IMR-90 (cell line): ENCODE measurements at regions of chr10 and their contacts with region 1.

Region 1: DNA sequence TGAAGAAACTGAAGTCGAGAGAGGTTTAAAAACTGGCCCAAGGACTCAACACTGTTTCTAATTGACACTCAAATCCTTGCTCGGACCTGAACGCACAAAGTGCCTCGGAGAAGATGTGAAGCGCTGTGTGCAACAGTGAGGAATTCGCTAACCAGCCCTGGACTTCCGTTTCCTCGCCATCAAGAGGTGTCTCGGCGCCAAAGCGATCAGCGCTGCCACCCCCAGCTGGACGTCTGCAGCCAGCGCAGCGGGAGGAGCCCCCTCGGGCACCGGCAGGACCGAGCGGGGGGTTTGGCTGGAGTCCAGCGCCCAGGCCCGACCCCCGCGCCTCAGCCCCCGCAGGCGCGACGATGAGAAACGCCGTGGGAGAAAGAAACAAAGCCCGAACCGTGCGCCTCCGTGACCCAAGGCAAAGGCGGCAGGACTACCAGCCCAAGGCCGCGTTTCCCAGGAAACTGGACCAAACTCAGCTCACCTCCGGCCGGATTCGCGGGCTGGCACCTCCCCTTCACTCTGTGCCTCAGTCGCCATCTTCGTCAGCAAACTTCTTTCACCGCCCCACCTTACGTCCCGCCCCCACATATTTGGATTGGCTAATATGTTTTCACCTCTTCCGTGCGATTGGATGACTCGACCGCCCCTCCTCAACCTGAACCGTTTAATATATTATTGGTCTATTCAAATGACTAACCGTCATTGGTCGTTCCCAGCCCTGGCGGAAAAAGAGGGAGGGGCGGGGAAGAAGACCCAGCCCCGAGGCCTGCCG is at the start of gene ARHGAP19:
- DNase-seq: peak; percentile 99
- ATAC-seq: peak; percentile 99
- H3K4me3 ChIP-seq: peak within 1 kb of the TSS; percentile 73
- H3K27ac ChIP-seq: peak within 1 kb of the TSS; percentile 72
- H3K4me1 ChIP-seq: no peaks in the 10 kb centered on the region
- H3K27me3 ChIP-seq: no peaks in the 10 kb centered on the region
- CTCF ChIP-seq: peak; percentile 35; the same call in 1 of the 2 replicates
- POLR2A ChIP-seq: peak; percentile 84
- RAD21 ChIP-seq: 0 out of 2 replicates have a peak, but pooled peaks have one; percentile 13
- total RNA-seq, gene ARHGAP19: 7.0 and 12.8 TPM in 2 replicates

Region 2: DNA sequence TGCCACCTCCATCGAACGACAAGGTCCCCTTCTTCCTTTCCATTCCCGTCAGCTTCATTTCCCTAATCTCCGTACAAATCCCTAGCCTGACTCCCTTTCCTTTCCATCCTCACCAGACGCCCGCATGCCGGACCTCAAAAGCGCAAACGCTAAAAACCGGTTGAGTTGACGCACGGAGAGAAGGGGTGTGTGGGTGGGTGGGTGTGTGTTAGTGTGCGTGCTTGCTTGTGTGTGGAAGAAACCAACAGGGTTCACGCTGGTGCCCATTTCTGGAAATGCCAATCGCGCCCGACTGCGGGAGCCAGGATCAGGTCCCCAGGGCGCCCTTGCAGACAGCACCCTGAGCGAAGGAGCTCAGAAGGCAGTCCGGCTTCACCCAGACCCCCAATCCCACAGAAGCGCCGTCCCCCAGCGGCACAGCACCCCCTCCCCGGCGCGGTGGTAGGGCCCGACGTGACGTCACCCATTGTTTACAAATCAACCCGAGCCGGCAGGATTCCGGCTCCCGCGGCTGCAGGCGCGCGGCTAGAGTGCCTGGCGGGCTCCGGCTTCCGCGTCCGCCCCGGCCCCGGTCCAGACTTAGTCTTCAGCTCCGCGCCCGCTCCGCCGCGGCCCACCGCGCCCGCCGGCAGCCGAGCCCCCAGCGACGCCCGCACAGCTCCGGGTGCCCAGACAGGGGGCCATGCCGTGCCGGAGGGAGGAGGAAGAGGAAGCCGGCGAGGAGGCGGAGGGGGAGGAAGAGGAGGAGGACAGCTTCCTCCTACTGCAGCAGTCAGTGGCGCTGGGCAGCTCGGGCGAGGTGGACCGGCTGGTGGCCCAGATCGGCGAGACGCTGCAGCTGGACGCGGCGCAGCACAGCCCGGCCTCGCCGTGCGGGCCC is 26.7 kb after region 1 on chr10 and contains the start of gene FRAT1:
- CTCF ChIA-PET with region 1: no interaction called
- POLR2A ChIA-PET with region 1: no interaction called
- dilution Hi-C with region 1: no loop called
- in situ Hi-C with region 1: no loop called
- intact Hi-C with region 1: loop called (anchors 2 kb)
- DNase-seq: peak; percentile 93
- ATAC-seq: peak; percentile 92
- H3K4me3 ChIP-seq: peak within 1 kb of the TSS; percentile 92
- H3K27ac ChIP-seq: peak within 1 kb of the TSS; percentile 100
- H3K4me1 ChIP-seq: peaks cover 8% of the 10 kb centered on the region; the same call in 1 of the 2 replicates
- H3K27me3 ChIP-seq: no peaks in the 10 kb centered on the region
- CTCF ChIP-seq: no peak
- POLR2A ChIP-seq: peak; percentile 88
- RAD21 ChIP-seq: no peak
- total RNA-seq, gene FRAT1: 0.54 and 0.83 TPM in 2 replicates

Region 3: DNA sequence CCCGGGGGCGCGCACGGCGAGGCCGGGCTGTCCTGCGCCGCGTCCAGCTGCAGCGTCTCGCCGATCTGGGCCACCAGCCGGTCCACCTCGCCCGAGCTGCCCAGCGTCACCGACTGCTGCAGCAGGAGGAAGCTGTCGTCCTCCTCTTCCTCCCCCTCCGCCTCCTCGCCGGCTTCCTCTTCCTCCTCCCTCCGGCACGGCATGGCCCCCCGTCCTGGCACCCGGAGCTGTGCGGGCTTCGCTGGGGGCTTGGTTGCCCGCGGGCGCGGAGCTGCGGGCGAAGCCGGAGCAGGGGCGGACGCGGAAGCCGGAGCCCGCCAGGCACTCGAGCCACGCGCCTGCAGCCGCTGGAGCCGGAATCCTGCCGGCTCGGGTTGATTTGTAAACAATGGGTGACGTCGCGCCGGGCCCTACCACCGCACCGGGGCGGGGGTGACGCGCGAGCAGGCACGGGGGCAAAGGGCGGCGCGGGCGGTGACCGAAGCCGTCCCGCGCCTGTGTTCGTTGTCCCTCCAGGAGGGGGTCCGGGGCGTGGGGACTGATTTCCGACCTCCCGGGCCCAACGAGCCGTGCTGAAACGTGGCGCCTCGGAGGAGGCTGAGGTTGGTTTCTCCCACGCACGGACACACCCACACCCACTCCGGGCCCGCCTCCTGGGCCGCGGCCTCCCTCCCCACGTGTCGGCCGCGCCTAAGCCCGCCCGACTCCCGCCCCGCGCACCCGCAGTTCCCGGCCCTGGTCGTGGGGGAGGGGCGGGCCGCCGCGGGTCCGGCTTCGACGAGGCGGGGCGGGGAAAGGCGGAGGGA is 42.3 kb after region 1 on chr10 and contains the start of gene FRAT2:
- CTCF ChIA-PET with region 1: no interaction called
- POLR2A ChIA-PET with region 1: no interaction called
- dilution Hi-C with region 1: no loop called
- in situ Hi-C with region 1: no loop called
- intact Hi-C with region 1: loop called (anchors 1 kb)
- DNase-seq: peak; percentile 91
- ATAC-seq: peak; percentile 90
- H3K4me3 ChIP-seq: peak within 1 kb of the TSS; percentile 72
- H3K27ac ChIP-seq: peak within 1 kb of the TSS; percentile 99
- H3K4me1 ChIP-seq: peaks cover 11% of the 10 kb centered on the region
- H3K27me3 ChIP-seq: peaks cover 19% of the 10 kb centered on the region
- CTCF ChIP-seq: no peak
- POLR2A ChIP-seq: peak; percentile 73
- RAD21 ChIP-seq: no peak
- total RNA-seq, gene FRAT2: 2.5 and 2.8 TPM in 2 replicates

Region 4: DNA sequence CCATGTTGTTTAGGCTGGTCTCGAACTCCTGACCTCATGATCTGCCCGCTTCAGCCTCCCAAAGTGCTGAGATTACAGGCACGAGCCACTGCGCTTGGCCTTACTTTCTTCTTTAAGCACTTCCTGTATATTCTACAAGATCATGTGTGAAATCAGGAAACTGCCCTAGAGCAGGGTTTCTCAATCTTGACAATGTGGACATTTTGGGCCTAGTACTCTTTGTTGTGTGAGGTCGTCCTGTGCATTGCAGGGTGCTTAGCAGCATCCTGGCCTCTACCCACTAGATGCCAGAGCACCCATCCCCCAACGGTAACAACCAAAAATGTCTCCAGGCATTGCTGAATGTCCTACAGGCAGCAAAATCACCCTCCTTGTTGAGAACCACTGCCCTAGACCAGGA is 84.1 kb after region 1 on chr10:
- CTCF ChIA-PET with region 1: no interaction called
- POLR2A ChIA-PET with region 1: no interaction called
- dilution Hi-C with region 1: no loop called
- in situ Hi-C with region 1: no loop called
- intact Hi-C with region 1: no loop called
- DNase-seq: no peak
- ATAC-seq: no peak
- H3K4me3 ChIP-seq: no peak overlapping the region
- H3K27ac ChIP-seq: no peak overlapping the region
- H3K4me1 ChIP-seq: no peaks in the 10 kb centered on the region
- H3K27me3 ChIP-seq: no peaks in the 10 kb centered on the region
- CTCF ChIP-seq: no peak
- POLR2A ChIP-seq: no peak
- RAD21 ChIP-seq: no peak